A673 (cell line): ENCODE measurements at regions of chr3 and their contacts with region 1.

Region 1: DNA sequence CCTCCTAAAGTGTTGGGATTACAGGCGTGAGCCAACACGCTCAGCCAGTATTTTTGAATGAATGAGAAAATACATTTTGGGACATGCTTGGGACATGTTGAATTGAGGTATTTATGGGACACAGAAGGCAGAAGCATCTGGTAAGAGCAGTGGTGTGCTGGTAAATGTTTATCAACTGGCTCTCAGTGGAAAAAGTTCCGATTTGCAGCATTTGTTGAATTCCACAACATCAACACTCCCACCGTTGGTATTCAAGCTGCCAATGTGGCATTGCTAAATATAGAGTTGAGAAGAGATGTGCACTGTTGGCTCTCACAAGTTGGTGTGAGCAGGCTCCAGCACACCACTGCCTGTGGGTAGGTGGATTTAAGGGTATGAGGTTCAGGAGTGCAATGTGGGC is 35.8 kb upstream of the LRRFIP2 start:
- DNase-seq: no peak
- H3K4me3 ChIP-seq: no peak overlapping the region
- H3K27ac ChIP-seq: no peak overlapping the region
- H3K4me1 ChIP-seq: no peaks in the 10 kb centered on the region
- H3K27me3 ChIP-seq: no peaks in the 10 kb centered on the region
- CTCF ChIP-seq: no peak

Region 2: GRCh38 chr3:37024092-37024491 is 186.1 kb before region 1 on chr3:
- CTCF ChIA-PET with region 1: interaction called, 5 read pairs
- POLR2A ChIA-PET with region 1: no interaction called
- intact Hi-C with region 1: loop called (anchors 2 kb)
- DNase-seq: peak; percentile 38
- H3K4me3 ChIP-seq: no peak overlapping the region
- H3K27ac ChIP-seq: no peak overlapping the region
- H3K4me1 ChIP-seq: no peaks in the 10 kb centered on the region
- H3K27me3 ChIP-seq: no peaks in the 10 kb centered on the region
- CTCF ChIP-seq: peak; percentile 49

Region 3: DNA sequence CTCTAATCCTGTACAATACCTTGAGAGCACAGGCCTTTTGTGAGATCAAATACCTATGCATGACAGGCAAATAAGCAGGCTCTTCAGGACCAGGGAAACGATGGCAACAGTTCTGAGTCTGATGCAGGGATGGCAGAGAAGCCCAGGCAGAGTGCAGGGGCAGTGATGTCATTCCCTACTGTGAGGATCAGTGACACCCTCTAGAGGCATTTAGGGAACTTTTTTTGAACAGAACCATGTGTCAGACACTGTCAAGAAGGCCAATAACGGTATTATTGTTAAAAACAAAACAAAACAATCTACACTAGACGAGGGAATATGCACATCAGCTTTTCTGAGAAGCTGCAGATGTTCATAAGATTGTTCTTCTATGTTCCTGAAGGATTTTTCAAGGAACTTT is 336.7 kb after region 1 on chr3:
- CTCF ChIA-PET with region 1: no interaction called
- POLR2A ChIA-PET with region 1: no interaction called
- intact Hi-C with region 1: no loop called
- DNase-seq: peak; percentile 18
- H3K4me3 ChIP-seq: no peak overlapping the region
- H3K27ac ChIP-seq: no peak overlapping the region
- H3K4me1 ChIP-seq: no peaks in the 10 kb centered on the region
- H3K27me3 ChIP-seq: no peaks in the 10 kb centered on the region
- CTCF ChIP-seq: peak; percentile 23; the same call in 1 of the 2 replicates